Caco-2 (cell line): ENCODE measurements at regions of chr5 and their contacts with region 1.

Region 1: GRCh38 chr5:148998174-148998797 is 64.6 kb downstream of the SH3TC2 start:
- DNase-seq: peak in 1 of 2 experiments; percentile 36
- H3K4me3 ChIP-seq: no peak overlapping the region
- H3K4me3 Mint-ChIP-seq: no peak overlapping the region
- H3K27ac Mint-ChIP-seq: no peak overlapping the region
- H3K4me1 ChIP-seq: peaks cover 22% of the 10 kb centered on the region
- H3K4me1 Mint-ChIP-seq: peaks cover 9% of the 10 kb centered on the region
- H3K27me3 ChIP-seq: no peaks in the 10 kb centered on the region
- H3K27me3 Mint-ChIP-seq: no peaks in the 10 kb centered on the region
- CTCF ChIP-seq: peak; percentile 53

Region 2: DNA sequence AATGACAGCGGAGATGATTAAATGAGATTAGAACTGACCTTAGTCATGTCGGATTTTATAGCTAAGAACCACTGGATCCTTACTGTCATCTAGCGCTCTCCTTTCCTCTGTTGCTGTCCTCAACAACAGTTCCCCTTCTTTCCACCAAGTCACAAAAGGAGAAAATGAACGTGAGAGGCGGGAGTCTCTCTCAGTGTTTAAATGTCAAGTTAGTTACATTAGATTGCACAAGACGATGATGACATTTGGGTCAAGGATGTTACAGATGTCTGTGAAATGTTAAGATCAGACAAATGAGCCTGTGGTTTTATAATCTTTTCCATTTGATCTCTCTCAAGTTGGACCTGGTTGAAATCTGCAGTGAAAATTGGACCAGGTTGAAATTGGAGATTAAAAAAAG is 561.0 kb before region 1 on chr5:
- CTCF ChIA-PET with region 1: no interaction called
- POLR2A ChIA-PET with region 1: no interaction called
- intact Hi-C with region 1: no loop called
- DNase-seq: no peak
- H3K4me3 ChIP-seq: no peak overlapping the region
- H3K4me3 Mint-ChIP-seq: no peak overlapping the region
- H3K27ac Mint-ChIP-seq: no peak overlapping the region
- H3K4me1 ChIP-seq: no peaks in the 10 kb centered on the region
- H3K4me1 Mint-ChIP-seq: no peaks in the 10 kb centered on the region
- H3K27me3 ChIP-seq: no peaks in the 10 kb centered on the region
- H3K27me3 Mint-ChIP-seq: no peaks in the 10 kb centered on the region
- CTCF ChIP-seq: no peak

Region 3: GRCh38 chr5:148532962-148533670 is 465.2 kb before region 1 on chr5:
- CTCF ChIA-PET with region 1: no interaction called
- POLR2A ChIA-PET with region 1: no interaction called
- intact Hi-C with region 1: no loop called
- DNase-seq: no peak
- H3K4me3 ChIP-seq: no peak overlapping the region
- H3K4me3 Mint-ChIP-seq: no peak overlapping the region
- H3K27ac Mint-ChIP-seq: no peak overlapping the region
- H3K4me1 ChIP-seq: no peaks in the 10 kb centered on the region
- H3K4me1 Mint-ChIP-seq: no peaks in the 10 kb centered on the region
- H3K27me3 ChIP-seq: no peaks in the 10 kb centered on the region
- H3K27me3 Mint-ChIP-seq: peaks cover 16% of the 10 kb centered on the region
- CTCF ChIP-seq: no peak

Region 4: DNA sequence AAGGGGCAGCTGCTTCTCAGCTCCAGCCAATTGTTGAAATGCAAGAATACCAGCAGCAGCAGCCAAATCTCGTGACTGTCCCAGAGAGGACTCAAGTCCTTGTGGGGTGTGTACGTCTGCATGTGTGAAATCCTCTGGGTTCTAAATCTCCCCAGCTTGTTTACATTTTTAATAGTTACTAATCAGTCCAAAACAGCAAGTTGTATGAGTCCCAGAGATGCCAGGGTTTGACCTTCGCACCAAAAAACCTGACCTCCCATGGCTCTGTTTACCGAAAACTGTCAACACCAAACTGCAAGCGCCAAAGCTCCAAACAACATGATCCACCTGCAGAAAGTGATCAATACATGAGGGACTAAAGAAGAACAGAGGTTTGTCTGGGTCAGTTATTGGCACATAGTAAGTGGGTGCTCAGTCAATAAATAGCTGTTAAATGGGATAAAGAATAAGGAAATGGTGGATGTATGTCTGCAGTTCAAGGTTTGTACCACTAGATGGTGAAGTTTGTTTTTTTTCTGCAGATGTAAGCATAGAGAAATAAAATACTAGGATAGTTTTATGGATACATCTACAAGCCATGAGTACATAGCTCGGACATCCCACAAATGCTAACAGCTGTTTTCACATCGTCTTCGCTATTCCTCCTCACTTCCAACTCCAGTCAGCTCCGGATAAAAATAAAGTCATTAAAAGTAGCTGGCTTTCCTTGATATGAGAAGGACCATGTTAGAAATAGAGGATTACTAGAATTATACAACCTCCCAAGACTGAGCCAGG is 257.1 kb before region 1 on chr5:
- CTCF ChIA-PET with region 1: no interaction called
- POLR2A ChIA-PET with region 1: no interaction called
- intact Hi-C with region 1: loop called (anchors 1 kb)
- DNase-seq: peak in 1 of 2 experiments; percentile 45
- H3K4me3 ChIP-seq: no peak overlapping the region
- H3K4me3 Mint-ChIP-seq: no peak overlapping the region
- H3K27ac Mint-ChIP-seq: no peak overlapping the region
- H3K4me1 ChIP-seq: no peaks in the 10 kb centered on the region
- H3K4me1 Mint-ChIP-seq: no peaks in the 10 kb centered on the region
- H3K27me3 ChIP-seq: no peaks in the 10 kb centered on the region
- H3K27me3 Mint-ChIP-seq: peaks cover 11% of the 10 kb centered on the region
- CTCF ChIP-seq: peak; percentile 64 to 67

Region 5: GRCh38 chr5:148820461-148821395 is 177.6 kb before region 1 on chr5:
- CTCF ChIA-PET with region 1: no interaction called
- POLR2A ChIA-PET with region 1: no interaction called
- intact Hi-C with region 1: loop called (anchors 1 kb)
- DNase-seq: peak in 1 of 2 experiments; percentile 37
- H3K4me3 ChIP-seq: no peak overlapping the region
- H3K4me3 Mint-ChIP-seq: no peak overlapping the region
- H3K27ac Mint-ChIP-seq: no peak overlapping the region
- H3K4me1 ChIP-seq: peaks cover 2% of the 10 kb centered on the region; the same call in 1 of the 2 replicates
- H3K4me1 Mint-ChIP-seq: peaks cover 4% of the 10 kb centered on the region
- H3K27me3 ChIP-seq: peaks cover 2% of the 10 kb centered on the region; the same call in 1 of the 2 replicates
- H3K27me3 Mint-ChIP-seq: peaks cover 27% of the 10 kb centered on the region
- CTCF ChIP-seq: peak; percentile 69 to 71

Region 6: DNA sequence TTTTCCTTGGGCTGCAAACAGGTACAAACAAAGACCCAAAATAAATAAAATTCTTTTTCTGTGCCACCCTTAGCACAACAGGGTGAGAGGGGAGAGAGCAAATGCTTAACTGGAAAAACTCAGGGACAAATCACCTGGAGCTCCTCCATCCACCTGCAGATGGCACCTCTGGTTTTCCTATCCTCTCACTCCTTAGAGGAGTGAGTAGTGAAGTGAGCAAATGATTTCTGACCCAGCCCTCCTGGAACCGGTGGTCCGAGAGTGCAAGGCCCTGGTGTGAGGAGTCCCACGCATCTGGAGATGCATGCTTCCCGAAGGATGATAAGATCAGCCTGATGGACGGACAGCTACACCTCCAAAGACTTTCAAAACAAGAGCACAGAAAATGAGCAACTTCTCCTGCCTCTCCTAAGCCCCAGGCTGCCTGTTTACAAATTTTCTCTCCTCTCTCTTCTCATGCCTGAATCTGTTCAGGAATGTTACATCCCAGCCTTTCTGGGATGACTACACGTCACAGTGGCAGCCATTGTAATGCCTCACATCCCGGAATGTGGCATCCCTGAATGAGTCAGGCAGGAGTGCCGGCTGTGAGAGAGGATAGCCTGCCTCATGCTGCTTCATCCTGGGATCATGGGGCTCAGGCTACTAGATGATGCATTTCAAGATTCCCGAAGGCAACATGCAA is 85.4 kb before region 1 on chr5:
- CTCF ChIA-PET with region 1: no interaction called
- POLR2A ChIA-PET with region 1: no interaction called
- intact Hi-C with region 1: loop called (anchors 1 kb)
- DNase-seq: peak in 1 of 2 experiments; percentile 40
- H3K4me3 ChIP-seq: no peak overlapping the region
- H3K4me3 Mint-ChIP-seq: no peak overlapping the region
- H3K27ac Mint-ChIP-seq: peak overlapping the region; percentile 50
- H3K4me1 ChIP-seq: peaks cover 31% of the 10 kb centered on the region
- H3K4me1 Mint-ChIP-seq: peaks cover 6% of the 10 kb centered on the region
- H3K27me3 ChIP-seq: no peaks in the 10 kb centered on the region
- H3K27me3 Mint-ChIP-seq: peaks cover 3% of the 10 kb centered on the region
- CTCF ChIP-seq: peak; percentile 50 to 65

Region 7: DNA sequence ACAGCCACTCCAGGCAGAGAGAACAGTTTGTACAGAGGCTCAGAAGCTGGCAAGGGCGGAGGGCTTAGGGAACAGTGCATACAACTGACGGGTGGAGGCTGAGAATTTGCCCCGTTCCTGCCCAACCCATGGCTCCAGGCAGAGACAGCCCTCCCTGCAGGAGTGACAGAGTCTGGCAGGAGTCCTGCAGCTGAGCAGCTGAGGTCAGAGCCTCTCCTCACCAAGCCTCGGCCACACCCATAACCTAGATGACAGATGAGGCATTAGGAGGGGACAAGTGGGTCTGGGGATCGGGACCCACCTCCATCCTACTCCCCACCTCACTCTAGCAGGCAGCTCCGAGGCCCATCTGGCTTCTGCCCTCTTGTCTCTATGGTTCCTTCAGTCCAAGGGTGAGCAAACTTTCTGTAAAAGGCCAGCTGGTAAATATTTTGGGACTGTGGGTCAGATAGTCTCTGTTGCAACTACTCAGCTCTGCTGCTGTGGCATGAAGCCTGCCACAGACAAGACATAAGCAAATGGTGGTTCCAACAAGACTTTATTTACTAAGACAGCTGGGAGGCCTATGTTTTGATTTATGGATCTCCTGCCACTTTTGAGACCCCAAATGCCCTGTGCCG is 19.1 kb before region 1 on chr5:
- CTCF ChIA-PET with region 1: no interaction called
- POLR2A ChIA-PET with region 1: no interaction called
- intact Hi-C with region 1: no loop called
- DNase-seq: no peak
- H3K4me3 ChIP-seq: no peak overlapping the region
- H3K4me3 Mint-ChIP-seq: no peak overlapping the region
- H3K27ac Mint-ChIP-seq: no peak overlapping the region
- H3K4me1 ChIP-seq: peaks cover 6% of the 10 kb centered on the region
- H3K4me1 Mint-ChIP-seq: no peaks in the 10 kb centered on the region
- H3K27me3 ChIP-seq: no peaks in the 10 kb centered on the region; the same call in 1 of the 2 replicates
- H3K27me3 Mint-ChIP-seq: peaks cover 1% of the 10 kb centered on the region
- CTCF ChIP-seq: no peak

Region 8: DNA sequence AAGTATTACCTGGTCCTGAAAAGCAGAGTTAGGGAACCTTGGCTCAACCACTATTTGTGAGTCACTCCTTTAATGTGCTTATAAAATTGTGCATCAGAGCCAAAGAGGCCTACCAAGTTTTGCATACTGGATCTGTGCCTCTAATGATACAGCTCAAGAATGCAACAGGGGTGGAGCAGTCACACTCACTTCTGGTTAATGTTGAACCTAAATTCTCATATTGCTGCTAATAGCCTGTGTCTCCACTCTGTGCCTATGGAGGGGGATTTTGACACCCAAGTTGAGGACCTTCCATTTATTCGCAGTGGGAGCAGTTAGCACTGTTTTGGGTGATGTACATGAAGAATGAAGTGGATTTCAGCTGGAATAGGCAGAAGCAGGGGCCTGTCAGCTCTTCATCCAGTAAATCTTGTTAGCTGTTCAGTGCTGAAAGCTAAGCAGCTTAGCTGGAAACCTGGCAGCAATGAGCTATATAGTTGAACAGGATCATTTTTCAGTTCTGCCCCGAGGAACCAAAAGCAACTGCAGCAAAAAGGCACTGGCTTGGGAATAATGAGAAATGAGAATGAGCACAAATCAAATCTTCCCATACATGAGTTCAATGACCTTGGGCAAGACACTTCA is 54.9 kb after region 1 on chr5:
- CTCF ChIA-PET with region 1: no interaction called
- POLR2A ChIA-PET with region 1: no interaction called
- intact Hi-C with region 1: no loop called
- DNase-seq: no peak
- H3K4me3 ChIP-seq: no peak overlapping the region
- H3K4me3 Mint-ChIP-seq: no peak overlapping the region
- H3K27ac Mint-ChIP-seq: no peak overlapping the region
- H3K4me1 ChIP-seq: no peaks in the 10 kb centered on the region
- H3K4me1 Mint-ChIP-seq: peaks cover 7% of the 10 kb centered on the region
- H3K27me3 ChIP-seq: no peaks in the 10 kb centered on the region
- H3K27me3 Mint-ChIP-seq: no peaks in the 10 kb centered on the region
- CTCF ChIP-seq: no peak